Aorta (tissue), 5 donors: ENCODE measurements at regions of chr17 and their contacts with region 1.

Region 1: DNA sequence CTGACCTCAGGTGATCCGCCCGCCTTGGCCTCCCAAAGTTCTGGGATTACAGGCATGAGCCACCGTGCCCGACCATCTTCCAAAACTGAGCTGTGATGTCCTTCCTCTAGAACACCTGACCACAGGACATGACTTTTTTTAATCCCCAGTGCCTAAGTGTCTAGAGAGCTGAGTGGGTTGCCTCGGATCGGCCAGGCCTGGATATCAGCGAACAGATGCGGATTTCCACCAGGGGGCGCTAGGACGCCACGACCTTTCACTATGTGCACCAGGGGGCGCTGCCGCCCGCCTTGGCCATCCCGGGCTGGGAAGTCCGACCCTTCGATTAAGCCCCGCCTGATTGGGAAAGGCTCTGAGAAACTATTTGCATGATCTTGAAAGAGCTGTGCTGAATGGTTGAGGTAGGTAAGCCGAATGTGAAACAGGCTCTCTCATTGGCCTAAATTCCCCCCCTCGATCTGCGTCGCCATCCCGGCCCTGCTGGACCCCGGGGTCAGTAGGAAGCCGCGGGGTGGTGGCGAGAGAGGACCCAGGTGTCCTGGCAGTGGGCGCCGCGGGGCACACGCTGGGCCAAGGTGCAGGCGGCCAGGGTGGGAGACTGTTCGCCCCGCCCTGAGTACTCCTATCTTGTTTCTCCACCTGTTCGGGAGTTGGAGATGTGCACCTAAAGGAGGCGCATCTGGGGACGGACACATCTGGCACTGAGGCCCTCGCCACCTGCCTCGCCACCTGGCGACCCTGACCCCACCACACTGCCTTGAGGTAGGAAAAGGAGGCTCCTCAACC is at the start of gene ACBD4:
- DNase-seq: peak; percentile 96 to 98
- ATAC-seq: peak; percentile 91
- H3K4me3 ChIP-seq: peak within 1 kb of the TSS; percentile 58 to 75
- H3K27ac ChIP-seq: peak within 1 kb of the TSS in 1 of 2 donors; percentile 76
- H3K4me1 ChIP-seq: no peaks in the 10 kb centered on the region
- H3K27me3 ChIP-seq: no peaks in the 10 kb centered on the region
- total RNA-seq, gene ACBD4: 16.1 to 23.4 TPM

Region 2: DNA sequence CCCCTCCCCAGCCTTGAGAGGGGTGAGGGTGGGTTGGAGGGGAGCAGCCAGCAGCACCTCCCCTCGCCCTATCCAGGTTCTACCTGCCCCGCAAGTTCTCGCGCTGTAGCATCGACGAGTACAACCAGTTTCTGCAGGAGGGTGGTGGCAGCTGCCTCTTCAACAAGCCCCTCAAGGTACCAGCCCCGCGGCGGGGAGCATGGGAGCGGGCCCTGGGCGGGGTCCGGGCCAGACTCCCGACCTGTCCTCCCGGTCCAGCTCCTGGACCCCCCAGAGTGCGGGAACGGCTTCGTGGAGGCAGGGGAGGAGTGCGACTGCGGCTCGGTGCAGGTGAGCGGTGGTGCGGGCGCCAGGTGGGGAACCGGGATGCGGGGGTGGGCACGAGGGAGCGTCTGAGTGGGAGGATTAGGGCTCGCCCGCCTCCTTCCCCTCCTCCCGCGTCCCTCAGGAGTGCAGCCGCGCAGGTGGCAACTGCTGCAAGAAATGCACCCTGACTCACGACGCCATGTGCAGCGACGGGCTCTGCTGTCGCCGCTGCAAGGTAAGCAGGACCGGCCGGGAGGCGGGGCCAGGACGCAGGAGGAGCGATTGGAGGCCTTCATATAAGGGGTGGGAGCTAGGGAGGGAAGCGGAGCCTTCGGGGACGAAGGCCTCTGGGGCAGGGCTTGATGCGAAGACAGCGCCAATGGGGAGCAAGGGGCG is 360.1 kb before region 1 on chr17:
- intact Hi-C with region 1: loop called (anchors 5 to 10 kb)
- DNase-seq: peak; percentile 98
- ATAC-seq: peak; percentile 95
- H3K4me3 ChIP-seq: peak overlapping the region in 1 of 2 donors; percentile 3
- H3K27ac ChIP-seq: no peak overlapping the region
- H3K4me1 ChIP-seq: no peaks in the 10 kb centered on the region
- H3K27me3 ChIP-seq: no peaks in the 10 kb centered on the region

Region 3: GRCh38 chr17:44919885-44920564 is 215.4 kb before region 1 on chr17:
- intact Hi-C with region 1: loop called (anchors 2 kb)
- DNase-seq: peak; percentile 87 to 92
- ATAC-seq: peak; percentile 87
- H3K4me3 ChIP-seq: no peak overlapping the region
- H3K27ac ChIP-seq: no peak overlapping the region
- H3K4me1 ChIP-seq: no peaks in the 10 kb centered on the region
- H3K27me3 ChIP-seq: no peaks in the 10 kb centered on the region

Region 4: DNA sequence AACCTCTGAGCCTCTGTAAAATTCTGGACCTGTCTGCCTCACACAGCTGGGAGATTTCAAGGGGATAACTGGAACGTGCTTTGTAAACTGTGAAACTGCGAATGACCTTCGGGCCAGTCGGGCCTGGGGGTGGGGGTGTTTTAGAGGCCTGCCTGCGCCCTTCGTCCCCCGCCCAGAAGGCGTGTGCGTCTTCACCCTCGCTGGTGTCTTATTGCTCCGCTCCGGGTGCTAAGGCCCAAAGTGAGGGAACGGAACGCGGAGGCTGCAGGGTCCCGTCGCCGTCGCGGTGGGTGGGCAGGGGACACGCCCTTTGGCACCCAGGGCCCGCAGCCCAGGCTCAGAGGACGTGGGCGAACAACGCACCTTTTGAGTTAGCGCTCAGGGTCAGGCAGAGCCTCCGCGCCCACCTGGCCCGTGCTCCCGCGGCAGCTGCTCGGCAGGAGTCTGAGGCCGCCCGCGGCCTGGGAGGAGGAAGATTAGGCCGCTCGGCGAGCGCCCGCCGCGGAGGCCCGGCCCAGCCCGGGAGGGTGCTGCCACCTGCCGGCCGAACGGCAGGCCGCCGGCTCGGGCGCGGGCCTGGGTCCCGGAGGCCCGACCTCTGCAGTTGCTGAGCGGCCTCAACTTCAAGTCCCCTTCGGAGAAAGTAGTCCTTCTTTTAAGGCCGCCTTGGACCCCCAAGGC is 113.6 kb before region 1 on chr17:
- intact Hi-C with region 1: loop called in 1 of 2 experiments (anchors 5 kb)
- DNase-seq: peak; percentile 79 to 92
- ATAC-seq: peak; percentile 91
- H3K4me3 ChIP-seq: no peak overlapping the region
- H3K27ac ChIP-seq: no peak overlapping the region
- H3K4me1 ChIP-seq: no peaks in the 10 kb centered on the region
- H3K27me3 ChIP-seq: no peaks in the 10 kb centered on the region

Region 5: DNA sequence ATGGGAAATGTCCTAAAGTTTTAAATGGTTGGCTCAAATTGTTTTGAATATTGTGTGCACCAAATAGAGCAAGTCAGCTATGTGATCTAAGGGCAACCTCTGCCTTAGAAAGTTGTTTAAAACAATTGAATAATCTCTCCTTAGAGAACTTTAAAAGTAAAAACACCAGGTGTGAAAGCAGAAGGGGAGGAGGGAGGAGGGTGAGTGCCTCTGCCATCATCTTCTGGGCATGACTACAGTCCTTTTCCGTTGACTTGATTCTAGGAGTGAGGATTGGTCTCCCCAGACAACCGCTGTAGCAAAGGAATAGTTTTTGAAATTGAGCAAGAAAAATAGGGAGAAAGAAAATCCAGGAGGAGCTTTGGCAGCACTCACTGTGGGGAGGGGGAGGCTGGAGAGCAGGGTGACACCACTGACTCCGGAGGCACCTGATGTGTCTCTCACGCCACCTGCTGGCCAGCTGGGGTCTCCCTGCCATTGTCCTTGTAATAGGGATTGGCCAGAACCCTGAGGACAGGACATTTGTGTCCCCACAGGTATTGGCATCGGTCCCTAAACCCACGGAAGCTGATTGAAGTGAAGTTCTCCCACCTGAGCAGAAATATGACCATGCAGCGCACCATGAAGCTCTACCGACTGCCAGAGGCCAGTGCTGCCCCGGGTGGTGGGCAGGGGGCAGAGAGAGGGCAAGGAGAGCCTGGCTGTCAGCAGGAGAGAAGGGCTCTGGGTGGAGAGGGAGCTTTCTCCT is 36.3 kb before region 1 on chr17:
- intact Hi-C with region 1: loop called (anchors 2 to 5 kb)
- DNase-seq: peak; percentile 93 to 96
- ATAC-seq: peak; percentile 91
- H3K4me3 ChIP-seq: no peak overlapping the region
- H3K27ac ChIP-seq: peak overlapping the region in 1 of 2 donors; percentile 44
- H3K4me1 ChIP-seq: no peaks in the 10 kb centered on the region
- H3K27me3 ChIP-seq: no peaks in the 10 kb centered on the region

Region 6: DNA sequence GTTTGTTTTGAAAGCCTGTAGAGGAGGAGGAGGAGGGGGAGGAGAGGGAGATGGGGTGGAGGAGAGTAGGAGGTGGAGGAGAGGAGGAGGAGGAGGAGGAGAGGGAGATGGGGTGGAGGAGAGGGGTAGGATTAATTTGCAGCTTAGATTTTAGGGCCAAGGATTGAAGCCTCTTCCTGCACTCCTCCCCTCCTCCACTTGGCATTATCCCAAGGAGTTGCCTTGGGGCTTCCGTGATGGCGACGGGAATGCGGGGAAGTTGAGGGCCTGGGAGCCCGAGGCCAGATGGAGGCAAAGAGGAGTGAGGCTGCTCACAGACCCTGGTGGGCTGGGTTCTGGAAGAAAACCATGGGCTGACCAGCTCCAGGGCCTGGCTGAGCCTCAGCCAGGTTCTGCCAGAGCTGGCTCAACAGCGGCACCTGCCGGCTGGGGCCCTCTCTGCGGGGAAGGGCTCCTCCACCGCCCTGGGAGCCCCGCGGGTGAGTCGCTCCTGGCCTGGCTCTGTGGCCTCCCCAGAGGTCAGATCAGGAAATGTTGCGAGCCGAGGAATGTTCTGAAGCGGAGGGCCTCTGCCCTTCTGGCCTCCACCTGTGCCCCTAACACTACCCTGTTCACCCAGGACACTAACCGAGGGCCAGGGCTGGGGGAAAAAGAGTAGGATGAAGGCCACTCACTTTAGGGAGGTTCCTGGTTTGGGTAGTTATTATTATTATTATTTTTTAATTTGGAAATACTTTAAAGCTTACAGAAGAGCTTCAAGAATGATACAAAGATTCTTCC is 62.4 kb after region 1 on chr17:
- intact Hi-C with region 1: loop called (anchors 1 kb)
- DNase-seq: peak; percentile 94 to 98
- ATAC-seq: peak; percentile 97
- H3K4me3 ChIP-seq: no peak overlapping the region
- H3K27ac ChIP-seq: no peak overlapping the region
- H3K4me1 ChIP-seq: no peaks in the 10 kb centered on the region
- H3K27me3 ChIP-seq: no peaks in the 10 kb centered on the region